Activated B cell treated with CpG ODN at 0.5 μM for 24 hours (primary cell): ENCODE measurements at regions of chr3 and their contacts with region 1.

Region 1: GRCh38 chr3:58217209-58217811 is 6.5 kb upstream of the DNASE1L3 start:
- DNase-seq: peak; percentile 42
- ATAC-seq: peak; percentile 58
- H3K4me3 Mint-ChIP-seq: peak overlapping the region; percentile 74
- H3K27ac Mint-ChIP-seq: peak overlapping the region; percentile 79
- H3K4me1 Mint-ChIP-seq: peaks cover 58% of the 10 kb centered on the region
- H3K27me3 Mint-ChIP-seq: no peaks in the 10 kb centered on the region
- CTCF ChIP-seq: peak; percentile 62

Region 2: DNA sequence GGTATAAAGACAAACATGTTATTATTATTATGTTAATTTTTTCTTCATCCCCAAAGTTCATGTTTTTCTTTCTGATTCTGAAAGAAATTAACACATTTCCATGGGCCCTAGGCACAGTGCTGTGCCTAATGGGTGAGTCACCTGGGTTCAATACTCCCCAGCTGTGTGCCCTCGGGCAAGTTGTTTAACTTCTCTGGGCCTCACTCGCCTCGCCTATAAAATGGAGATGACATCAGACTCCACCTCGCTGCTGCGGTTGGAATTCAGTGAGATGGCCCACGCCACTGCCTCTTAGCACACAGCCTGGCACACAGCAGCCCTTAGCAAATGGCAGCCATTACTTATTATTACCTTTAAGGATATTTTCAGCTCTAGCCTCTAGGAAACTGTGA is 29.1 kb before region 1 on chr3:
- CTCF ChIA-PET with region 1: interaction called, 116 read pairs
- POLR2A ChIA-PET with region 1: interaction called, 20 read pairs
- intact Hi-C with region 1: loop called (anchors 1 kb)
- DNase-seq: no peak
- ATAC-seq: peak; percentile 18
- H3K4me3 Mint-ChIP-seq: no peak overlapping the region
- H3K27ac Mint-ChIP-seq: peak overlapping the region; percentile 61
- H3K4me1 Mint-ChIP-seq: peaks cover 7% of the 10 kb centered on the region
- H3K27me3 Mint-ChIP-seq: no peaks in the 10 kb centered on the region
- CTCF ChIP-seq: no peak

Region 3: GRCh38 chr3:58200846-58201355 is 16.4 kb before region 1 on chr3:
- CTCF ChIA-PET with region 1: interaction called, 29 read pairs
- POLR2A ChIA-PET with region 1: interaction called, 286 read pairs
- intact Hi-C with region 1: loop called (anchors 1 kb)
- DNase-seq: no peak
- ATAC-seq: no peak
- H3K4me3 Mint-ChIP-seq: peak overlapping the region; percentile 64
- H3K27ac Mint-ChIP-seq: peak overlapping the region; percentile 70
- H3K4me1 Mint-ChIP-seq: peaks cover 66% of the 10 kb centered on the region
- H3K27me3 Mint-ChIP-seq: no peaks in the 10 kb centered on the region
- CTCF ChIP-seq: no peak

Region 4: DNA sequence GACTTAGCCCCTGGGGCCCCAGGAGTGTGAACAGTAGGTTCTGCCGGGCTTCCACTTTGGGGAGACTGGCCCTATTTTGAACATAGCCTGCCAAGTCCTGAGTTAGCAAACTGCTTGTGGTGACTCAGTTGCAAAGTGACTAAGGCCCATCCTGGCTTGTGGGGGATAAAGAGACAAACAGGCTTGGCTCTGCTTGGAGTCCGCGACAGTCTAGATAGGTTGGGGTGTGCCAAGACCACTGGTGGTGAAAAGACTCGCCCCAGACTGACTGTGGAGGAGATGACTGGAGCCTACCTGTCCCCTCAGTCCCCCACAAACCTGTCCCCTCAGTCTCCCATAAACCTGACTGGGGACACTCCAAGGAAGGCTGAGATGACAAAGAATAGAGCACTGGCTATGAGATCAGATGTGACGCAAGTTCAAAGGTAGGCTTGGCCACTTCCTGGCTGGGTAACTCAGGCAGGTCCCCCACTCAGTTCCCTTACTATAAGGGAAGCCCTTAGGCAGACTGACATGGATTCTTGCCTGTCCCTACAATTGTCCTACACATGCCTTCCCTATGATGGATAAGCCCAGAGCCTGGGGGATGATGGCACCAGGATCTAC is 10.8 kb before region 1 on chr3:
- CTCF ChIA-PET with region 1: interaction called, 17 read pairs
- POLR2A ChIA-PET with region 1: interaction called, 286 read pairs
- intact Hi-C with region 1: loop called (anchors 1 kb)
- DNase-seq: no peak
- ATAC-seq: no peak
- H3K4me3 Mint-ChIP-seq: no peak overlapping the region
- H3K27ac Mint-ChIP-seq: peak overlapping the region; percentile 36
- H3K4me1 Mint-ChIP-seq: peaks cover 42% of the 10 kb centered on the region
- H3K27me3 Mint-ChIP-seq: no peaks in the 10 kb centered on the region
- CTCF ChIP-seq: no peak

Region 5: GRCh38 chr3:58231666-58232065 is 14.4 kb after region 1 on chr3:
- CTCF ChIA-PET with region 1: interaction called, 51 read pairs
- POLR2A ChIA-PET with region 1: interaction called, 40 read pairs
- intact Hi-C with region 1: loop called (anchors 1 kb)
- DNase-seq: no peak
- ATAC-seq: no peak
- H3K4me3 Mint-ChIP-seq: no peak overlapping the region
- H3K27ac Mint-ChIP-seq: peak overlapping the region; percentile 90
- H3K4me1 Mint-ChIP-seq: peaks cover 63% of the 10 kb centered on the region
- H3K27me3 Mint-ChIP-seq: no peaks in the 10 kb centered on the region
- CTCF ChIP-seq: no peak

Region 6: DNA sequence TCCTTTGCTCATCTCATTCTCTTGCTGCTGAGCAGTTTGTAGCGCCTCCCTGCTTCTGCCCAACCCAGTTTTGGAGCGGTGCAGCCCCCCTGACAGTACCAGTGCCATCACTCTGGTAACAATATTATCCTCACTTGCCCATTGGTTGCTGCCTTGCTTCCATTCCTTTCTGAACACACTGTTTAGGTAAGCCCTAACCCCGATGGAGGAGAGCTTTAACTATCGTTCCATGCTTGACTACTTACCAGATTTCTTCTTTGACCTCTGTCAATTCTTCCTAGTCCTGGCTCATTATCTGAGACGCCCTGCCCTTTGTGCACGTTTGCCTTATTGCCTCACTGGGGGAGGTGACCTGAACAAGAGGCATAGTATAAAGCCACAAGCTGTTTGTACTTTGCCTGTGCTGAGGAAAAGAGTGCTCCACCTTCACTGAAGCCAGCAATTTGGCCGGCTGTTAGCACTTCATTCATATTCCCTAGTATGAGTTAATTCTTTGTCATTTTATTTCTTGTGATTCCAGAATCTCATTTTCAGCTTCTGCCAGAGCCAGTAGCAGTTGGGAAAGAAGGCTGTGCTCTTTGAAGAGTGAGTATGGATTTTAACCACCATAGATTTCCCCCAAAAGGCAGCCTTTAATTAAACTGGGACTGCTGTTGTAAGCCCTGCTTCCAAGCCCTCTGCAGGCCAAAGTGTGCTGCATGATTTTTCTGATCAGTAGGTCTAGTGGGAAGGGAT is 32.2 kb after region 1 on chr3:
- CTCF ChIA-PET with region 1: no interaction called
- POLR2A ChIA-PET with region 1: interaction called, 3 read pairs
- intact Hi-C with region 1: loop called (anchors 1 kb)
- DNase-seq: no peak
- ATAC-seq: peak; percentile 94
- H3K4me3 Mint-ChIP-seq: peak overlapping the region; percentile 49
- H3K27ac Mint-ChIP-seq: peak overlapping the region; percentile 50
- H3K4me1 Mint-ChIP-seq: peaks cover 34% of the 10 kb centered on the region
- H3K27me3 Mint-ChIP-seq: no peaks in the 10 kb centered on the region
- CTCF ChIP-seq: no peak

Region 7: GRCh38 chr3:58299839-58300516 is 82.7 kb after region 1 on chr3:
- CTCF ChIA-PET with region 1: interaction called, 14 read pairs
- POLR2A ChIA-PET with region 1: interaction called, 7 read pairs
- intact Hi-C with region 1: loop called (anchors 1 kb)
- DNase-seq: no peak
- ATAC-seq: peak; percentile 58
- H3K4me3 Mint-ChIP-seq: no peak overlapping the region
- H3K27ac Mint-ChIP-seq: no peak overlapping the region
- H3K4me1 Mint-ChIP-seq: peaks cover 1% of the 10 kb centered on the region
- H3K27me3 Mint-ChIP-seq: peaks cover 3% of the 10 kb centered on the region
- CTCF ChIP-seq: no peak

Region 8: GRCh38 chr3:58345457-58345856 is 128.1 kb after region 1 on chr3:
- CTCF ChIA-PET with region 1: no interaction called
- POLR2A ChIA-PET with region 1: no interaction called
- intact Hi-C with region 1: no loop called
- DNase-seq: no peak
- ATAC-seq: no peak
- H3K4me3 Mint-ChIP-seq: no peak overlapping the region
- H3K27ac Mint-ChIP-seq: no peak overlapping the region
- H3K4me1 Mint-ChIP-seq: peaks cover 94% of the 10 kb centered on the region
- H3K27me3 Mint-ChIP-seq: no peaks in the 10 kb centered on the region
- CTCF ChIP-seq: no peak